PC-9 (cell line): ENCODE measurements at regions of chr14 and their contacts with region 1.

Region 1: GRCh38 chr14:24160850-24161804 is at the start of gene IRF9:
- DNase-seq: peak; percentile 82 to 95
- H3K4me3 ChIP-seq: peak within 1 kb of the TSS; percentile 41; the same call in 1 of the 2 replicates
- H3K27ac ChIP-seq: no peak within 1 kb of the TSS
- H3K4me1 ChIP-seq: peaks cover 13% of the 10 kb centered on the region
- H3K27me3 ChIP-seq: no peaks in the 10 kb centered on the region
- CTCF ChIP-seq: peak; percentile 88
- total RNA-seq, gene IRF9: 18.8 and 21.4 TPM in 2 replicates

Region 2: DNA sequence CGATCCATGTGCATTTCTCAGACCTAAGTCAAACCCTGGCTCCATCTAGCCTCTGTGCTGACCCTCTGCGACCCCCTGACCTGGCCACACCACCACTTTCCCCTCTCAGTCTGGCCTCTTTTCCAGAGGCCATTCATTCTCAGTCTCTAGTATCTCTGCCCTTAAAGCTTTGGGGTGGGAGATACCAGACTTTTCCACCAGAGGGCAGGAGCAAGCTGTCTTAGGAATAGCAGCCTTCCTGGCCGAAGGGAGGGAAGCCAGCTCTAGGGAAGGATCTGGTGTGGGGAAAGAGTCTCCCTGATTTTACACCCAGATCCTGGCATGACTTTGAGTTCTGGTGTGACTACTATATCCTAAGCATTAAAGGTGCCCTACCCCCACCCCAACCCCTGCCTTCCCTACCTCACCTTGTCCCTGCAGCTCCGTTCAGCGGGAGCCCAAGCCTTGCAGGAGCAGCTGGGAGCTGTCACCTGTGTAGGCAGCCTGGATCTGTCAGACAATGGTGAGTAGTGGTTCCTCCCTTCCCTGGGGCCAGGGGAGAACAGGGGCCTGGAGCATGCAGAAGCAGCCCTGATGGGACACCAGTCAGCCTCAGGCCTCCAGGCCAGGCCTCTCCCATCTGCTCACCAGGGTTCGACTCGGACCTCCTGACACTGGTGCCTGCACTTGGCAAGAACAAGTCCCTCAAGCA is 102.7 kb before region 1 on chr14:
- CTCF ChIA-PET with region 1: interaction called, 6 read pairs
- POLR2A ChIA-PET with region 1: no interaction called
- intact Hi-C with region 1: loop called (anchors 2 kb)
- DNase-seq: peak in 1 of 2 experiments; percentile 70
- H3K4me3 ChIP-seq: no peak overlapping the region
- H3K27ac ChIP-seq: no peak overlapping the region
- H3K4me1 ChIP-seq: no peaks in the 10 kb centered on the region
- H3K27me3 ChIP-seq: peaks cover 24% of the 10 kb centered on the region
- CTCF ChIP-seq: peak; percentile 84

Region 3: DNA sequence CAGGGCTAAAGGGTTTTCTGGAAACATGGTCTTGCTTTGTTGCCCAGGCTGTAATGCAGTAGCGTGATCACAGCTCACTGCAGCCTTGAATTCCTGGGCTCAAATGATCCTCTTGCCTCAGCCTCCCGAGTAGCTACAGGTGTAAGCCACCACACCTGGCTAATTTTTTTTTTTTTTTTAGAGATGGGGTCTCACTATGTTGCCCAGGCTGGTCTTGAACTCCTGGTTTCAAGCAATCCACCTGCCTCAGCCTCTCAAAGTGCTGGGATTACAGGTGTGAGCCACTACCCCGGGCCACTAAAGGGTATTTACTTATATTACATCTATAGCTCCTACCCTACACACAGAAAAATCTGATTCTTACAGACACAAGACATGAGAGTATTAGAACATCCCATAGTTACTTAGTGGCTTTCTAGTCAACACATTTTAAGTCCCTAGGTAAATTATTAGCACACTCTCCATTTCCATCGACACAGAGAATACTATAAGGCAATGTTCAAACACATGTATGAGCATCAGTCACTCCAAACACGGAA is 52.7 kb before region 1 on chr14:
- CTCF ChIA-PET with region 1: interaction called, 13 read pairs
- POLR2A ChIA-PET with region 1: no interaction called
- intact Hi-C with region 1: no loop called
- DNase-seq: no peak
- H3K4me3 ChIP-seq: no peak overlapping the region
- H3K27ac ChIP-seq: no peak overlapping the region
- H3K4me1 ChIP-seq: peaks cover 21% of the 10 kb centered on the region
- H3K27me3 ChIP-seq: no peaks in the 10 kb centered on the region
- CTCF ChIP-seq: no peak

Region 4: DNA sequence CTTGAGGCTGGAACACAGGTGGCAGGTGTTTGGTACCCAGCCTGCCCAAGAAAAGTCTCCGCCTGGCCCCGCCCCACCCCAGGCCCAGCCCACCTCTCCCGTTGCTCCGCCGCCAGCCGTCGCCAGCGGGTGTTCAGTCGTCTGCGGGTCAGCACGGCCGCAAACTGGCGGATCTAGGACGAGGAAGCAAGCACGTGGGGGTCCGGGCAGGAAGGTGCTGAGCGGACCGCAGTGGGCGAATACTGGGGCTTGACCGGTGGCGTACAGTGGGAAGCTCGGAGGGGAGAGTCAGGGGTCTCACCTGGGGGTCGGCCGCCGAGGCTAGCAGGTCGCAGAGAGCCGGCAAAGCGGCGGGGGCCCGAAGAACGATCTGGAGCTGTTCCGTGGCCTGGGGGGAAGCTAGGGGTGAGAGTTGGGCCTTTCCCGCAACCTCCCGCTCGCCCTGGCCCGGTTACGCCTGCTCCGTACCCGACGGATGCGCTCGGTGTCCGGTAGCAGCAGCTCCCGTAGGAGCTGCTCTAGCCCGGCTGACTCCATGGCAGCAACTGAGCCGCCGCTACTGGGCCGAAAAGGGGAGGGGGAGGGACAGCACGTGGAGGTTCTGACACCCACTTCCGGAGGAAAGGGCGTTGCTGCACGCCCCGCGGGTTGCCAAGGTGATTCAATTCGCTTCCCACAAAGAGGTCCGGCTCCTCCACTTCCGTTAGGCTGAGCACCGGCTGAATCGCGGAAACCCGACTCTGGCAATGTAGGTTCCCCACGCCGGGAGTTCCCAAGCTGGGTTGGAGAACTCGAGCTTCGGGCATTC is 27.3 kb after region 1 on chr14 and contains the start of gene IPO4:
- CTCF ChIA-PET with region 1: interaction called, 3 read pairs
- POLR2A ChIA-PET with region 1: no interaction called
- intact Hi-C with region 1: loop called (anchors 1 kb)
- DNase-seq: peak; percentile 86 to 87
- H3K4me3 ChIP-seq: peak within 1 kb of the TSS; percentile 88
- H3K27ac ChIP-seq: peak within 1 kb of the TSS; percentile 61
- H3K4me1 ChIP-seq: peaks cover 11% of the 10 kb centered on the region
- H3K27me3 ChIP-seq: no peaks in the 10 kb centered on the region
- CTCF ChIP-seq: no peak
- total RNA-seq, gene IPO4: 39.0 and 44.1 TPM in 2 replicates

Region 5: DNA sequence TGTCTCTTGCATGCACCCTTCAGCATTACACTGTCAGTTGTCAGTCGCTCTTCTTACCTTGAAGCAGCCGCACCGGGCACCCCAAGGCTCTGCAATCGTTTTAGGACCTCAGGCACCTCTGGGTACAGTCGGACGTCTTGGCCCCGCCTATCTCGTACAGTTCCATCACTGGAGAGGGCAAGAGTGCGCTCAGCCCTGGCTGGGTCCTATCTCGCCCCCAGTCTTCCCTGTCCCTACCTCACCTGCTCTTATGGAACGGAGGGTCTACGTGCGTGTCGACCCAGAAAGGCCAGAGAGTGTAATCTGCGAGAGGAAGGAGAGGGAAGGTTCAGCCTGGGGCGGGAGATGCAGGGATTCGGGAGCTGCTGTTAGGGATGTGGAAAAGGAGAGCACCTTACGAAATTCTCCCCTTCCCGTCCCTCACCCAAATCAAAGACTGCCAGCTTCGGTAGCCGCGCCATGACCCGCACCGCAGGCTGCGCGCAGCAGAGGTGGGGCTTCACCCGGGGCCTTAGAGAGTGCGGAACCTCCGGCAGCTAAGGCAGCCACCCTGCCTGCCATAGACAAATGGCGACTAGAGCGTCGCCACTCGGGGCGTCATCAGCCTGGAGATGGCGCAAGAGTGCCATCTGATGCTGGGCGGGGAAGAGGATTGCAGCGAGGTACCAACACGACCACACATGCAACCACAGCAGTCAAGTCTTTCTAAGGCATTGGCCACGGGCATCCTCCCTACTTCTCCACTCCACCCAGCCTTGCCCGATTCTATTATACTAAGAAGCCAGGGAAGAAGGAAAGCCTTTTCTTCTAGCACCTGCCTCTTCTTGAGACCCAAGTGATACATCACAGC is 54.6 kb after region 1 on chr14 and contains the start of gene MDP1:
- CTCF ChIA-PET with region 1: no interaction called
- POLR2A ChIA-PET with region 1: interaction called, 3 read pairs
- intact Hi-C with region 1: loop called (anchors 1 kb)
- DNase-seq: peak; percentile 66 to 74
- H3K4me3 ChIP-seq: peak within 1 kb of the TSS; percentile 73
- H3K27ac ChIP-seq: peak within 1 kb of the TSS; percentile 36; the same call in 1 of the 2 replicates
- H3K4me1 ChIP-seq: peaks cover 10% of the 10 kb centered on the region; the same call in 1 of the 2 replicates
- H3K27me3 ChIP-seq: no peaks in the 10 kb centered on the region
- CTCF ChIP-seq: no peak
- total RNA-seq, gene MDP1: 8.7 and 15.3 TPM in 2 replicates